ENCODE measurements at regions of chr2 and their contacts with region 1.

Region 1: DNA sequence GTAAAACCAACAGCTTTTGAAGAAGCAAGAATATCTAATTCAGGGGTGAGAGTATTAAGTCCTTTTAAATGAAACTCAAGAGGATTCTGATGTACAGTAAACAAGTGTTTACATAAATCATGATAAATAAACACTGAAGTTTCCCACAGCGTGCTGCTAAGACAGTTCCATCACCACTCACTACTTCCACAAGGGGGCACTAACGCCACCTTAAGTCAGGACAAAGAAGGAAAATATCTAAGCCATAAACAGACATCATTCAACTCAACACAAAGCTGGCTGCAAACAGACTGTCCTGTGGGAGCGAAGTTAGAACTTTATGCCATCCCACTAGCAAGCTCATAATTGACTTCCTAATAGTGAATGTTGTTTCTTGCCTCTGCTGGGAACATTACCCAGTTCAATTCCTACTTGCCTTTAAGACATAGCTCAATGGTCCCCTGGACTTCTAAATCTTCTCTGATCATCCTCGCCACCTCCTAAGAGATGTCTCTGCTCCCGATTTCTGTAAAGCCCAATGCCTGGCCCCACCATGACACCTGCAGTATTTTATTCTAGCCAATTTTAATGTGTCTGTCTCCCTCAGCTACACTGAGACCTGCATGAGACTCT is 36.5 kb downstream of the MRPL44 start:
- DNase-seq: peak; percentile 73 to 79
- H3K4me3 ChIP-seq: no peak overlapping the region
- H3K4me3 Mint-ChIP-seq: no peak overlapping the region
- H3K27ac Mint-ChIP-seq: no peak overlapping the region
- H3K4me1 ChIP-seq: peaks cover 5% of the 10 kb centered on the region
- H3K4me1 Mint-ChIP-seq: peaks cover 10% of the 10 kb centered on the region
- H3K27me3 ChIP-seq: no peaks in the 10 kb centered on the region
- H3K27me3 Mint-ChIP-seq: no peaks in the 10 kb centered on the region
- CTCF ChIP-seq: peak; percentile 90 to 92

Region 2: GRCh38 chr2:223970343-223971128 is 23.2 kb before region 1 on chr2:
- CTCF ChIA-PET with region 1: interaction called, 34 read pairs
- POLR2A ChIA-PET with region 1: no interaction called
- intact Hi-C with region 1: loop called (anchors 1 kb)
- DNase-seq: peak in 1 of 2 experiments; percentile 76
- H3K4me3 ChIP-seq: no peak overlapping the region
- H3K4me3 Mint-ChIP-seq: no peak overlapping the region
- H3K27ac Mint-ChIP-seq: no peak overlapping the region
- H3K4me1 ChIP-seq: no peaks in the 10 kb centered on the region
- H3K4me1 Mint-ChIP-seq: no peaks in the 10 kb centered on the region
- H3K27me3 ChIP-seq: no peaks in the 10 kb centered on the region
- H3K27me3 Mint-ChIP-seq: no peaks in the 10 kb centered on the region
- CTCF ChIP-seq: peak; percentile 95 to 98

Region 3: GRCh38 chr2:224039124-224039940 is 45.6 kb after region 1 on chr2 and contains the start of gene SERPINE2:
- CTCF ChIA-PET with region 1: interaction called, 4 read pairs
- POLR2A ChIA-PET with region 1: no interaction called
- intact Hi-C with region 1: loop called (anchors 1 kb)
- DNase-seq: peak; percentile 54 to 66
- H3K4me3 ChIP-seq: peak within 1 kb of the TSS; percentile 48
- H3K4me3 Mint-ChIP-seq: peak within 1 kb of the TSS; percentile 66
- H3K27ac Mint-ChIP-seq: no peak within 1 kb of the TSS
- H3K4me1 ChIP-seq: peaks cover 7% of the 10 kb centered on the region
- H3K4me1 Mint-ChIP-seq: peaks cover 7% of the 10 kb centered on the region
- H3K27me3 ChIP-seq: peaks cover 6% of the 10 kb centered on the region
- H3K27me3 Mint-ChIP-seq: peaks cover 47% of the 10 kb centered on the region
- CTCF ChIP-seq: peak in 1 of 2 experiments; percentile 37
- total RNA-seq, gene SERPINE2: 3.8 and 4.7 TPM in 2 replicates

Region 4: DNA sequence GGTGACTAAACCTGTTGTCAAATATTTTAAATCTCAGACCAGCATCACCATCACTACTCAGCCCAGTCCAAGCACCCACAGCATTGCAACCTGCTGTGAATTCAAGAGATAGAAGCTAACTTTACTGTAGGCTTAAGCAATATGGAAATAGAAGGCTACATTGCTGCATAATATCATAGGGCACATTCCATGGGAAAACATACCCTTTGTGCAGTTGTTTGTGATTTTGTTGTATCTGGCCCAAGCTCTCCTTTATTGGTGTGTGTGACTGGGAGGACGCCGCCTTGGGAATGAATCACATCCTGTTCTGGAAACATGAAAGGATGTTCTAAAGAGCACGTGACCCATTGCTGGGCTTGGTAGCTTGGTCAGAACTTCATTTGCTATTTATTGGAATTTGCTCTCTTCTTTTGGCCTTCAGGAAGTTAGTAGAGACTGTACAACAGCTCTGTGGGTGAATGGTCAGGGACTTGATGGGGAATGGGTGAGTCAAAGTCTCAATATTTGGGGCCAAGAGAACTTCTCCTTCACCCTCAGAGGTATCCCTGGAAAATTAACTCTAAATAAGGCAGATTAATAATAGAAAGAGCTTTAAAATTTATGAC is 152.1 kb after region 1 on chr2:
- CTCF ChIA-PET with region 1: no interaction called
- POLR2A ChIA-PET with region 1: no interaction called
- intact Hi-C with region 1: loop called (anchors 1 kb)
- DNase-seq: peak in 1 of 2 experiments; percentile 57
- H3K4me3 ChIP-seq: no peak overlapping the region
- H3K4me3 Mint-ChIP-seq: peak overlapping the region; percentile 6
- H3K27ac Mint-ChIP-seq: peak overlapping the region; percentile 16
- H3K4me1 ChIP-seq: peaks cover 24% of the 10 kb centered on the region
- H3K4me1 Mint-ChIP-seq: peaks cover 15% of the 10 kb centered on the region
- H3K27me3 ChIP-seq: no peaks in the 10 kb centered on the region
- H3K27me3 Mint-ChIP-seq: no peaks in the 10 kb centered on the region
- CTCF ChIP-seq: no peak

Region 5: GRCh38 chr2:224319455-224320149 is 325.9 kb after region 1 on chr2:
- CTCF ChIA-PET with region 1: no interaction called
- POLR2A ChIA-PET with region 1: no interaction called
- intact Hi-C with region 1: no loop called
- DNase-seq: no peak
- H3K4me3 ChIP-seq: no peak overlapping the region
- H3K4me3 Mint-ChIP-seq: no peak overlapping the region
- H3K27ac Mint-ChIP-seq: no peak overlapping the region
- H3K4me1 ChIP-seq: no peaks in the 10 kb centered on the region
- H3K4me1 Mint-ChIP-seq: no peaks in the 10 kb centered on the region
- H3K27me3 ChIP-seq: peaks cover 1% of the 10 kb centered on the region; the same call in 1 of the 2 replicates
- H3K27me3 Mint-ChIP-seq: peaks cover 16% of the 10 kb centered on the region
- CTCF ChIP-seq: no peak

Region 6: DNA sequence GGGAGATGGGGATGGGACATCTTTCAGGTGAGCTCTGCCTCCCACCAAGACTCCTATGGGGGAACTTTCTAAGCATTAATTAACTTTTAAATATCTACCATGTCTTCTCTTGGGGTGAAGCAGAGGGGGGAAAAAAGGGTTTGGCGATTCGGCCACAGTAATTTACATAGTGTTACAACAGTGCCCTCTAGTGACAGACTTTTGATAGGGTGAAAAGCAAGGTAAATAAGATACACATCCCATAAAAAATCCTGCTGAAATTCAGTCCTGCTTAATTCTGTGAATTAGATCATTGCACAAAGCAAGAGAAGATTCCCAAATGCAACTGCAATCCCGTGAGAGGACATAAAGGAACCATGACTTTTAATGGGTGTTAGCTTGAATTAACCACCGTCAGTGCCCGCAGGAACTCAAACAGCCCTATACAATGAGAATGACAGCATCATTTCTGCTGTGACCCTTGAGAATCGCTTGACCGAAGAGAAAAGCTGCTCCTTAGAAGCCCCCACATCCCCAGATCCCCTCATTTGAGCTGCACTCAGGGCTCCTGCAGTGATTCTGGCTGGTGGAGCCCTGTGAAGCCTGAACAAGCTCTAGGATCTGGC is 375.4 kb after region 1 on chr2:
- CTCF ChIA-PET with region 1: interaction called, 3 read pairs
- POLR2A ChIA-PET with region 1: no interaction called
- intact Hi-C with region 1: loop called (anchors 2 kb)
- DNase-seq: peak in 1 of 2 experiments; percentile 58
- H3K4me3 ChIP-seq: no peak overlapping the region
- H3K4me3 Mint-ChIP-seq: no peak overlapping the region
- H3K27ac Mint-ChIP-seq: no peak overlapping the region
- H3K4me1 ChIP-seq: no peaks in the 10 kb centered on the region
- H3K4me1 Mint-ChIP-seq: no peaks in the 10 kb centered on the region
- H3K27me3 ChIP-seq: no peaks in the 10 kb centered on the region
- H3K27me3 Mint-ChIP-seq: peaks cover 8% of the 10 kb centered on the region
- CTCF ChIP-seq: peak; percentile 71 to 83

Region 7: DNA sequence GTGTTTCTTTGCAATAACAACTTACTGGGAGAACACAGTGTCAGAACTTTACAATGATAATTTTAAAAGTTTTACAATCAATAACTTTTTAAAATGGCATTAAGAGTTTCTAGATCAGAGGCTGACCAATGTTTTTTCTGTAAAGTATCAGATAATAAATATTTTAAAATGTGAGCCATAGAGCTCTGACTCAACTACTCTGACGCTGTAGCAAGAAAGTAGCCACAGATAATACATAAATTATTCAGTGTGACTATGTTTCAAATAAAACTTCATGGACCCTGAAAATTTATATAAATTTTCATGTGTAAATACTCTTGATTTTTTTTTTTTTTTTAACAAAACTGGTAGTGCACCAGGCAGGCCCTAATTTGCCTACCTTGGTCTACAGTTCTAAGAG is 514.1 kb after region 1 on chr2:
- CTCF ChIA-PET with region 1: no interaction called
- POLR2A ChIA-PET with region 1: no interaction called
- intact Hi-C with region 1: no loop called
- DNase-seq: no peak
- H3K4me3 ChIP-seq: no peak overlapping the region
- H3K4me3 Mint-ChIP-seq: no peak overlapping the region
- H3K27ac Mint-ChIP-seq: no peak overlapping the region
- H3K4me1 ChIP-seq: 0 out of 2 replicates have a peak, but pooled peaks cover under 1% of the 10 kb centered on the region
- H3K4me1 Mint-ChIP-seq: no peaks in the 10 kb centered on the region
- H3K27me3 ChIP-seq: no peaks in the 10 kb centered on the region
- H3K27me3 Mint-ChIP-seq: no peaks in the 10 kb centered on the region
- CTCF ChIP-seq: no peak

Measured in Caco-2 (cell line).